ENCODE measurements at regions of chr17 and their contacts with region 1.

Region 1: DNA sequence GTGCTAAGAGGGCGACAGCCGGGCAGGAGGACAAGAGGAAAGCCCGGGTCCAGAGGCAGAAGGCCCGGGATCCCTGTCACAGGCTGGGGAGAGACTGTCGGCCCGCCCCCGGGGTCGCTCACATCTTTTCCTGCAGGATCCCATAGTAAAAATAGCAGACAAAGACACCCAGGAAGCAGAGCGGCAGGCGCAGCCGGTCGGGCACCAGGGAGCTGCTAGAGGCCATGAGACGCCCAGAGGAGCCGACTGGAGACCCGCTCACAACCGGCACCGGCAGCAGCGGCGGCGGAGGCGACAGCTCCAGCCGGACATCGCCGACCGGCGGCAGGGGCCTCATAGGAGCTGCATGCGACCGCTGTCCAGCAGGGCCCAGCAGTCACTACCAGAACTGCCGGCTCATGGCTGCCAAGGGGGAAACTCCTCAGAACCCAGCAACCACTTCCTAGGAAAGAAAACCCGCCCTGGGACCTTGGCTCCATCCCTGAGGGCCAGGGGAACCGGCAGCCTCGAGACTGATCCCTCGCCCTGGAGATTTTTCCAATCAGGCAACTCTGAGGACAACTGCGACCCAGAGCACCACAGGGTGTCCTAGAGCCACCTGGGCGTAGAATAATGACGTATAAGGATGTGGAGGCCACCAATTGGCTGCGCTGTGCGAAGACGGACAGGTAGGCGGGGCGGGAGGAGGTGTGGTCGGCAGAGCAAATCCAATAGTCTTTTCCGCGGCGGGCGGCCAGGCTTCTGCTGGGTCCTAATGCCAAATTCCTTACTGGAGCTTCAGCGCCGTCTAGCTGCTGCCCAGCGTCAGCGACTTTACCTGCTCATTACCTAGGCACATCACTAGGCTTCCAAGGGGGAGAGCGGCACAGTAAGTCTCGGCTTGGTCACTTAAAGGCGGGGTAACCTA is at the start of gene SLC35B1:
- DNase-seq: peak; percentile 99 to 100
- ATAC-seq: peak; percentile 99
- H3K4me3 ChIP-seq: peak within 1 kb of the TSS; percentile 45 to 80
- H3K27ac ChIP-seq: peak within 1 kb of the TSS in 1 of 2 donors; percentile 53
- H3K4me1 ChIP-seq: no peaks in the 10 kb centered on the region
- H3K27me3 ChIP-seq: no peaks in the 10 kb centered on the region
- total RNA-seq, gene SLC35B1: 31.5 to 43.7 TPM

Region 2: DNA sequence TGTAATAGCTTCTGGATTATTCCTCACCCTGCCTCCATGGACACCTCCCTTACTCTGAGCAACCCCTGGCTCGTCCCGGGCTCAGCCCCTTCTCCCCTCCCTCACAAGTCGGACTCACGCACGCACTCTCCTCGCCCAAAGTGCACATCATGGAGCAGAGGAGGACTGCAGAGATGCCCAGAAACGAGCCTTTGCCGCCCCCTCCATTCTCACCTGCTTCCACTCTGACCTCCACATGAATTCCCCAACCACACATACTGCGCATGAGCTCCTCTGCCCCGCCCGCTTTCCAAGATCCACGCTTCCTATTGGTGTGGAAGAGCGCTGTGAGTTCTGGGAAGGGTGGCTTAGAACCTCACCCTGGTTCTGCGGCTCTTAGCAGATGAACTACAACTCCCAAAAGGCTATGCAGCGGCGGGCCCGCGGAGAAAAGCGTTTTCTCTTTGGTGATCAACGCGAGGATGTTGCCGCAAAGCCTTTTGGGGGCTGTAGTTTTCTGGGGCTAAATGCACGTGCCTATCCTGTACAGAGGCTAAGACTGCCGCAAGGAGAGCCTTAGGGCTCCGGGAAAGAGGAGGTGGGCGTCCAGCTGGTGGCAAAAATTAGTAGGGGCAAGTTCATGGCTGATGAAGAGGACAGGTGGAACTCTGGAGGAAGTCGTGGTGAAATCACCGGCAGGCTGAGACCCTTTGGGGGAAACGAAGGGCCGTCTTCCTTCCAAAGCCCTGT is 293.1 kb before region 1 on chr17 and contains the start of gene PHB1:
- intact Hi-C with region 1: loop called in 1 of 2 experiments (anchors 10 kb)
- DNase-seq: peak; percentile 97 to 98
- ATAC-seq: peak; percentile 100
- H3K4me3 ChIP-seq: peak within 1 kb of the TSS; percentile 67 to 79
- H3K27ac ChIP-seq: peak within 1 kb of the TSS in 1 of 2 donors; percentile 29
- H3K4me1 ChIP-seq: peaks cover 0 to 2% of the 10 kb centered on the region in 2 donors
- H3K27me3 ChIP-seq: no peaks in the 10 kb centered on the region
- total RNA-seq, gene PHB1: 73.2 to 76.0 TPM

Region 3: DNA sequence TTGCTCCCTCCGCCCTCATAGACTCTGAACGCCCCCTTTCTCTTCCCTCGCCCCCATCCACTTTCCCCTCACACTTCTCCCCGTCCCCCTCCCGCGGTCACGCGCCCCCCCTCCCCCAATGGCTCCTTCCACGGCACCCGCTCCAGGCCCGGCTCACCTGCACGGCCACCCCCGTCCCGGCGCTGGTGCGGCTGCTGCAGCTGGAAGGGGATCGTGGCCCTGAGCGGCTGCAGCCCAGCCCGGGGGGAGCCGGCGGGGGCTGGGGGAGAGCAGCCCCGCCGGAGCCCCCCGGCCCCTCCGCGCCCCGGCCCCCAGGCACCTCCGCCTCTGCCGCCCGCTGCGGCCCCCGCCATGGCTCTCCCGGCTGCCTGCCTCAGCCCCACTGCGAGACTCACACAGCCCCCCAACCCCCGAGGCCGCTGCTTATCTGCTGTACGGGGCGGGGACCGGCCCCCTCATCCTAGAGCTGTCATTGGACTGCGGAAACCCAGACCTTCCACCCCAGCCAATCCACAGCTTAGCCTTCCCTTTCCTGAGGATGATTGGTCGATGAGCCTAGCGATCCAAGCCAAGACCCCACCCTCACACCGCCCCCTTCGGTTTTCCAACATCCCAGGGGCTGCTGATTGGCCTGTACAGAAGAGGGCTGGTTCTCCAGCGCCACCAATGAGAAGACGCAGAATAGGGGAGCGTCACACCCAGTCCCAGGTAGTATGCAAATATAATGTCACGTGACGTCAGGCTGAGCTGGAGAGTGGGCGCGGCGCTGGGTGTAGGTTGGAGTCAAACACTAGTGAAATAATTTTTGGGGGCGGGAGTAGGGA is 56.1 kb after region 1 on chr17 and contains the start of gene FAM117A:
- intact Hi-C with region 1: loop called in 1 of 2 experiments (anchors 5 kb)
- DNase-seq: peak; percentile 95 to 97
- ATAC-seq: peak; percentile 98
- H3K4me3 ChIP-seq: peak within 1 kb of the TSS; percentile 92 to 94
- H3K27ac ChIP-seq: no peak within 1 kb of the TSS
- H3K4me1 ChIP-seq: no peaks in the 10 kb centered on the region
- H3K27me3 ChIP-seq: no peaks in the 10 kb centered on the region
- total RNA-seq, gene FAM117A: 16.9 to 17.2 TPM

Region 4: DNA sequence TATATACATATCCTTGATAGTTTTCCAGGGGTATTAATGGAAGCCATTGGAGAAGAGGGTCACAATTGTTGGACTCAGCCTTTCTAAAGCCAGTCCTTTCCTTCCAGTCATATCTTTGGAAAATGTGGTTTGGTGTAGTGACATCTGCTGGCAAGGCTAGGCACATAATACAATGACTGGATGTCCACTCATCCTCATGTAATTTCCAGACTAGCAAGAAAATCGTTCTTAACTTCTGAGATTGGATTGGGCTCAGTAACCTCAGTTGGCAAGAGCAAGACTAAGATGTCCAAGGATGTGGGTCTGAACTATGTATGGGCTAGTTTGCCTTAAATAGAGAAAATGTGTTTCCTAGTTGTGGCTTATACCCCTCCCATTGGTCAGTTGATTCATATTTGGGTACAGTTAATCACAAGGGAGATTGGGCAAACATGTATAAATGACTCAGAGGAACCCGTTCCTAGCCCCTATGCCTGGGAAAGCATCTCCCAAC is 71.9 kb after region 1 on chr17:
- intact Hi-C with region 1: loop called (anchors 5 kb)
- DNase-seq: no peak
- ATAC-seq: peak; percentile 72
- H3K4me3 ChIP-seq: no peak overlapping the region
- H3K27ac ChIP-seq: peak overlapping the region in 1 of 2 donors; percentile 46
- H3K4me1 ChIP-seq: peaks cover 5 to 10% of the 10 kb centered on the region in 2 donors
- H3K27me3 ChIP-seq: no peaks in the 10 kb centered on the region

Region 5: DNA sequence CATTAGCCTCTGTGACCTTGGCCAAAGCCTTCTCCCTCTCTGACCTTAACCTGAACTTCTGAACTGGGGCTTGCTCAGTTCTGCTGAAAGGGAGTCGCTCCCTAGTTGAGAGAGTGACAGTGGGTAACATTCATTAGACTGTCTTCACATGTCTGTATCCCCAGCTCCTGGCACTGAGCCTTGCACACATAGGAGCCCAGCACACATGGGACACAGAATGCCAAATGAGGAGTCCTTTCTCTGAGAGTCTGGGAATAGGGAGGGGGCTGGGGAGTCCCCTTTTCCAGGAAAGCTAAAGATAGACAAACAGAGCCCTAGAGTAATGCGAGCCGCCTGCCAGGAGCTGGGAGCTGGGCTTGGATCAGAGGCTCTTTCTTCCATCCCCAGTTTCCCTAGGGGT is 137.5 kb after region 1 on chr17:
- intact Hi-C with region 1: loop called (anchors 2 to 5 kb)
- DNase-seq: peak in 1 of 2 donors; percentile 73
- ATAC-seq: peak; percentile 75
- H3K4me3 ChIP-seq: no peak overlapping the region
- H3K27ac ChIP-seq: peak overlapping the region in 1 of 2 donors; percentile 18
- H3K4me1 ChIP-seq: peaks cover 0 to 2% of the 10 kb centered on the region in 2 donors
- H3K27me3 ChIP-seq: no peaks in the 10 kb centered on the region

Region 6: DNA sequence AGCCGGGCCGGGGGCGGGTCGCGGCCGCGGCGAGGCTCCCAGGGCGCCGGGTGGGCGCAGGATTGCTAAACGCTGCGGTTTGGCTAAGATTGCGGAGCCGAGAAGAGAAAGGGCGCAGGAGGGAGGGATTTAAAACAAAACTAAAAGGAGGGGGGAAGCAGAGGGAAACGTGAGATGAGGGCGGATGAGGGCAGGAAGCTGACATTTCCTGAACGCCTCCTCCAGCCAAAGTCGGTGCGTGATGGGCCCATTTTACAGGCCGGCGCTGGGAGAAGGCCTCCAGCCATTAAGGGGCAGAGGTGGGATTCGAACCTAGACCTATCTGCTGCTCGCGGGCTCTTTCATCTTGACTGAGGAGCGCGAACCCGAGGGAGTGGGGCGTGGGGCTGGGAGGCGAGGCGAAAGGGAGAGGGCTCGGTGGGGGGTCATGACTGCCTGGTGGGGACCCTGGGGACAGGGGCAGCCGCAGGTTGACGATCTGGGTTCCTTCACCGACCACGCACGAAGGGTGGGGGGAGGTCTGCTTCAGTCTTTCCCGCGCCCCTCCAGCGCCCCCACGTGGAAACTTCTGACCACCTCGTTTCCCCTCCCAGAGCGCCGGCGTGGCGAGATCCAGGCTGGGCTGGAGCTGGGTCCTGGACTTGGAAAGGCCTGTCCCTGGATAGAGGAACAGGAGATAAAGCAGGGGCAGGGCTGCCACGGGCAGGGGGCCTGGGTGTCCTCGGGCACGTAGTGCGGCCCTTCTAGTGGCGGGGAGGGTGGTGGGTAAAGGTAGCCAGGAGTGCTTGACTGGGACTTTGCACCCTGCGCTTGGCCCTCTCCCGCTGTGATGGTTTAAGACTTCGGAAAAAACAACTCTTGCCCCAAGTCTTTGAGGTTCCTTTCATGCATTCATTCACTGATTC is 143.8 kb after region 1 on chr17:
- intact Hi-C with region 1: loop called (anchors 2 to 5 kb)
- DNase-seq: peak; percentile 89 to 95
- ATAC-seq: peak; percentile 85
- H3K4me3 ChIP-seq: peak overlapping the region; percentile 64 to 84
- H3K27ac ChIP-seq: no peak overlapping the region
- H3K4me1 ChIP-seq: no peaks in the 10 kb centered on the region
- H3K27me3 ChIP-seq: no peaks in the 10 kb centered on the region

Measured in aorta (tissue), 5 donors.